AG04450 (cell line): ENCODE measurements at regions of chr1 and their contacts with region 1.

Region 1: DNA sequence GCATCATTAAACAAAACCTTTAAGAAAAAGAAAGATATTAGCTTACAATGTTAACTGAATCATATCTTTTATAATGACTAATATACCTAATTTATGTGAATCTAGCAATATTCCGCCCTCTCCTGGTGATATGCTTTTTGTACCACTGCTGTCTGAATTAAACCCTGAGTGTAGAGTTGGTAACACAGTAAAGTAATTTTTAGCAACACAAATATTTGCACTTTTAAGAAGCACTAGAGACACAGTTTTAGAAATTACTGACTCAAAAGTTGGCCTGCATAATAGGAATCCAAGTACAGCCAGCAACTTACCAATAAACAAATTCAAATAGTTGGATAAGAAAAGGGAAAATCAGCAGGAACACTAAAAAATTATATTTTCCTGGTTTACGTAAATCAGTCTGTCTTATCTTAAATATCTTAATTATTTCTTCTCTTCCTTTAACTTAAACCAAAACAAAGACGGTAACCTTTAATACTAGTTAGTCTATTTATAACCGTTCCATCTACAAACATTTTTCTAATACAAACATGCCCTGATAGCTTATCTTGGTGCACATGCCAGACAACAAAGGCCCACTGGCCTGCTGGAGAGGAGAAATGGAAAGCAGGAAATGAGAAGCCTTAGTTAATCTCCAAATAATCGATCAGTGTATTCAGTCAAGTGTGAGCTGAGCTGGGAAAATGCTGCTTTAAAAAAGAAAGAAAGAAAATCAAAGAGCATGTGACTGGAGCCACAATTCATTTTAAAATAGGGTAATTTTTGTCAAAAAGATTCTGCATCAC is 246.0 kb downstream of the RERE start:
- DNase-seq: no peak
- H3K4me3 ChIP-seq: no peak overlapping the region
- H3K27ac ChIP-seq: no peak overlapping the region
- H3K27me3 ChIP-seq: no peaks in the 10 kb centered on the region
- CTCF ChIP-seq: peak; percentile 61

Region 2: DNA sequence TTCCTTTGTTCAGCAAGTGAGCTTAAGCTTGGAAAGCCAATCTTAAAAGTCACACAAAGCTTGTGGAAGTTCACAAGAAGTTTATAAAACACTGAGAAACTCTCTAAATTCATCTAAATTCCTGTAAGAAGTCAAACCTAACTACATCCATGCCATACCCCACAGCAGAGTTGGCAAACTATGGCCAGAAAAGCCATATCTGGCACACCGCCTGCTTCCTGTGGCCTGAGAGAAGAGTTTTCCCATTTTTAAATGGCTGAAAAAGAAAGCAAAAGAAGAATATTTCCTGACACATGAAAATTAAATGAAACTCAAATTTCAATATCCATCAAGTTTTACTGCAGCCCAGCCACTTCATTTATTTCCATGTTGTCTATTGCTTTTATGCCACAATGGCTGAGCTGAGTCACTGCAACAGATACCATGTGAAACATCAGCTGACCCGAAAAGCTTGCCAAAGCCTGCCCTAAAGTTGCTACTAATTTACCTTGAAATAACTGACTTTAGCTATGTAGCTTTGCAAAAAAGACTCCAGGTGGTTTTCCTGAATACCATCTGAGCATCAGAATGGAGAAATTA is 16.3 kb before region 1 on chr1:
- CTCF ChIA-PET with region 1: interaction called, 10 read pairs
- POLR2A ChIA-PET with region 1: interaction called, 3 read pairs
- DNase-seq: no peak
- H3K4me3 ChIP-seq: no peak overlapping the region
- H3K27ac ChIP-seq: no peak overlapping the region
- H3K27me3 ChIP-seq: no peaks in the 10 kb centered on the region
- CTCF ChIP-seq: no peak

Region 3: GRCh38 chr1:8586438-8586837 is 15.0 kb after region 1 on chr1:
- CTCF ChIA-PET with region 1: interaction called, 18 read pairs
- POLR2A ChIA-PET with region 1: no interaction called
- DNase-seq: no peak
- H3K4me3 ChIP-seq: no peak overlapping the region
- H3K27ac ChIP-seq: no peak overlapping the region
- H3K27me3 ChIP-seq: no peaks in the 10 kb centered on the region
- CTCF ChIP-seq: no peak

Region 4: DNA sequence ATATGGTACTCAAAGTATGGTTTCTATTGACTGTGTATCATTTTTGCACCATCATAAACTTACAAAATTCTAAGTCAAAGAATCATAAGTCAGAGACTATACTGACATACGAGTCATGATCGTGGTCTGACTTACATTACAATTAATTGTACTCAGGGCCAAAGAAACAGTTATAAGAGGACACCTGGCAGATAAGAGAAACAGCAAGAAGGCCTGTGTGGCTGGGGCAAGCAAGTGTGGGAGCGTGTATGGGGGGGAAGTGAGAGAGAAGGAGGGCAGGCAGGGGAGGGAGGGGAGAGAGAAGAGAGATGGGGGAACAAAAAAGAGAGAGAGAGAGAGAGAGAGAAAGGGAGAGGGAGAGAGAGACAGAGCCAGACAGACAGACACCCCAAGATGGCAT is 175.2 kb after region 1 on chr1:
- CTCF ChIA-PET with region 1: no interaction called
- POLR2A ChIA-PET with region 1: no interaction called
- DNase-seq: no peak
- H3K4me3 ChIP-seq: no peak overlapping the region
- H3K27ac ChIP-seq: no peak overlapping the region
- H3K27me3 ChIP-seq: no peaks in the 10 kb centered on the region
- CTCF ChIP-seq: no peak